CD8-positive, alpha-beta T cell (primary cell): ENCODE measurements at regions of chr1 and their contacts with region 1.

Region 1: DNA sequence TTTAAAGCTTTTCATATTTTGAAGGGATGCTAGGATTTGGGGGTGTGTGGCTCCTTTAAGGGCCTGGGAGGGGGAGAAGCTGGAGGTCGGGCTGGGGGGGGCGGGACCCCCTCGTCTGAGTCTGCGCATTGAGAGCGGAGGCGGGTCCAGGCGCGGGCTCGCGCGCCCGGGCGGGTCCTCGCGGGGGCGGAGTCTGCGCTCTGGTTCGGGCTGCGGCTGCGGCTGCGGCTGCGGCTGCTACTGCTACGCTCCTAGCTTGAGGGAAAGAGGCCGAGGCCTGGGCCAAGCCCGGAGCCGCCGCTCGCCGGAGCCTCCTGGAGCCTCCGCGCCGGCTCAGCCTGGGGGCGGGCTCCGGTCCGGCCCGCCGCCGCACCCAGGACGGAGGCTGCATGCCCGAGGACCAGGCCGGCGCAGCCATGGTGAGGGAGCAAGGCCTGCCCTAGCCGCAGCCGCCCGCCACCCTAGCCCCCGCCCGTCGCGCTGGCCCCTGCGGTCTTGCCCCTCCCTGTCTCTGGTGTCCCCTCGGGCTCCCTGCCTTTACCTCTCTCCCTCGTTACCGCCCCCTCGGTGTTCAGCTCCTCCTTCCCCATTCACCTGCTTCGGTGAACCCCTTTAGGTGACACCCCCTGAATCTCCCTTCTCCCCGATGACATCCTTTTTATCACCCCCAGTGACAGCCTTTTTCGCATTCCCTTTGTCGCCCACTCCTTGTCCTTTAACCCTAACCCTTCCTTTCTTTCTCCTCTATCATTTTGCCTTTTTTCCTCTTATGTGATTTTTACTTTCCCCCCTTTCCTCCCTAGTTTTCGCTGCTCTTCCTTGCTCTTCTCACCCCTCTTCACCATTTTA is at the start of gene ZYG11B:
- DNase-seq: peak; percentile 80 to 95 (median 89)
- ATAC-seq: peak; percentile 89
- H3K4me3 ChIP-seq: peak within 1 kb of the TSS; percentile 56 to 72
- H3K4me3 Mint-ChIP-seq: peak within 1 kb of the TSS; percentile 90
- H3K27ac ChIP-seq: peak within 1 kb of the TSS; percentile 37 to 48
- H3K27ac Mint-ChIP-seq: peak within 1 kb of the TSS; percentile 84
- H3K4me1 ChIP-seq: peaks cover 16% of the 10 kb centered on the region
- H3K4me1 Mint-ChIP-seq: peaks cover 42% of the 10 kb centered on the region
- H3K27me3 ChIP-seq: peaks cover 0 to 3% of the 10 kb centered on the region in 2 experiments
- H3K27me3 Mint-ChIP-seq: peaks cover 3% of the 10 kb centered on the region
- CTCF ChIP-seq: no peak
- total RNA-seq, gene ZYG11B: 9.8 to 10.4 TPM

Region 2: GRCh38 chr1:51616901-51617708 is 1109.4 kb before region 1 on chr1 and contains the start of gene OSBPL9:
- CTCF ChIA-PET with region 1: no interaction called
- POLR2A ChIA-PET with region 1: no interaction called
- intact Hi-C with region 1: loop called in 1 of 2 experiments (anchors 10 kb)
- DNase-seq: peak; percentile 78 to 94 (median 87)
- ATAC-seq: peak; percentile 93
- H3K4me3 ChIP-seq: peak within 1 kb of the TSS; percentile 90 to 98
- H3K4me3 Mint-ChIP-seq: peak within 1 kb of the TSS; percentile 100
- H3K27ac ChIP-seq: peak within 1 kb of the TSS; percentile 84
- H3K27ac Mint-ChIP-seq: peak within 1 kb of the TSS; percentile 99
- H3K4me1 ChIP-seq: peaks cover 23% of the 10 kb centered on the region
- H3K4me1 Mint-ChIP-seq: peaks cover 42% of the 10 kb centered on the region
- H3K27me3 ChIP-seq: no peaks in the 10 kb centered on the region
- H3K27me3 Mint-ChIP-seq: peaks cover under 1% of the 10 kb centered on the region
- CTCF ChIP-seq: no peak
- total RNA-seq, gene OSBPL9: 48.5 to 49.2 TPM

Region 3: DNA sequence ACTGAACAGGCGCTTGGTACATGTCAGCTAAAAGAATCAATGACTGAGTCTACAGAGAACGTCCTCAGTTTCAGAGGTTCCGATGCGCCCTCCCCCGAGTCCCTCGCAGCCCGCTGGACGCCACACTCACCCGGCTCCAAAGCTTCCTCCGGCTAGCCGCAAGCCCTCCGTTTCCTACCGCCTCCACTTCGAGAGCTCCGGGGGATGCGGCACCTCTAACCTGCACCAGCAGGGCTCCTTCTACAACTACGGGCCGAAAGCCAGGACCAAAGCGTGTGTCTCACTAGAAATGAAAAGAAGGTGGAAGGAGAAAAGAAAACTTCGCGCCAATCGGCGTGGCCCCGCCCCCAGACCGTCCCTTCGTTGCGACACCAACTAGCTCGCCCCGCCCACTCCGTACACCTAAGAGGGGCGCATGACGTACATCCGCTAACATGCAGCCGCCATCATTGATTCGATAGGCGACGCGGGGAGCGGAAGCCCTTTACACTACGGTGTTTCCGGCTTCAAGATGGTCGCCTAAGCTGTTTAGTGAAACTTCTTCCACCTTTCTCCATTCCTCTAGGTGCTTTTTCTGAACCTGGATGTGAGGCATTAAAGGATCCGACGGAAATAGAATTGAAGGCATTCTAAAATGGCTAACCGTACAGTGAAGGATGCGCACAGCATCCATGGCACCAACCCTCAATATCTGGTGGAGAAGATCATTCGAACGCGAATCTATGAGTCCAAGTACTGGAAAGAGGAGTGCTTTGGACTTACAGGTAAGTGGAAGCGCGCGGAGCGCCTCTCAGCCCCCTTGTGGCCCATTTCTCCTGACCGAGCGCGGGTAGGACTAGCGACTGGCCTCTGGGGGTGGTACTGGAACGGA is 322.1 kb before region 1 on chr1 and contains the starts of genes ORC1 and PRPF38A:
- CTCF ChIA-PET with region 1: no interaction called
- POLR2A ChIA-PET with region 1: interaction called, 4 read pairs
- intact Hi-C with region 1: loop called in 1 of 2 experiments (anchors 1 kb)
- DNase-seq: peak; percentile 94 to 99 (median 98)
- ATAC-seq: peak; percentile 92
- H3K4me3 ChIP-seq: peak within 1 kb of the TSS; percentile 87 to 92
- H3K4me3 Mint-ChIP-seq: peak within 1 kb of the TSS; percentile 99
- H3K27ac ChIP-seq: peak within 1 kb of the TSS; percentile 96
- H3K27ac Mint-ChIP-seq: peak within 1 kb of the TSS; percentile 98
- H3K4me1 ChIP-seq: peaks cover 26% of the 10 kb centered on the region
- H3K4me1 Mint-ChIP-seq: peaks cover 42% of the 10 kb centered on the region
- H3K27me3 ChIP-seq: no peaks in the 10 kb centered on the region
- H3K27me3 Mint-ChIP-seq: no peaks in the 10 kb centered on the region
- CTCF ChIP-seq: no peak
- total RNA-seq, gene ORC1: 1.2 to 1.3 TPM
- total RNA-seq, gene PRPF38A: 52.2 to 62.0 TPM

Region 4: DNA sequence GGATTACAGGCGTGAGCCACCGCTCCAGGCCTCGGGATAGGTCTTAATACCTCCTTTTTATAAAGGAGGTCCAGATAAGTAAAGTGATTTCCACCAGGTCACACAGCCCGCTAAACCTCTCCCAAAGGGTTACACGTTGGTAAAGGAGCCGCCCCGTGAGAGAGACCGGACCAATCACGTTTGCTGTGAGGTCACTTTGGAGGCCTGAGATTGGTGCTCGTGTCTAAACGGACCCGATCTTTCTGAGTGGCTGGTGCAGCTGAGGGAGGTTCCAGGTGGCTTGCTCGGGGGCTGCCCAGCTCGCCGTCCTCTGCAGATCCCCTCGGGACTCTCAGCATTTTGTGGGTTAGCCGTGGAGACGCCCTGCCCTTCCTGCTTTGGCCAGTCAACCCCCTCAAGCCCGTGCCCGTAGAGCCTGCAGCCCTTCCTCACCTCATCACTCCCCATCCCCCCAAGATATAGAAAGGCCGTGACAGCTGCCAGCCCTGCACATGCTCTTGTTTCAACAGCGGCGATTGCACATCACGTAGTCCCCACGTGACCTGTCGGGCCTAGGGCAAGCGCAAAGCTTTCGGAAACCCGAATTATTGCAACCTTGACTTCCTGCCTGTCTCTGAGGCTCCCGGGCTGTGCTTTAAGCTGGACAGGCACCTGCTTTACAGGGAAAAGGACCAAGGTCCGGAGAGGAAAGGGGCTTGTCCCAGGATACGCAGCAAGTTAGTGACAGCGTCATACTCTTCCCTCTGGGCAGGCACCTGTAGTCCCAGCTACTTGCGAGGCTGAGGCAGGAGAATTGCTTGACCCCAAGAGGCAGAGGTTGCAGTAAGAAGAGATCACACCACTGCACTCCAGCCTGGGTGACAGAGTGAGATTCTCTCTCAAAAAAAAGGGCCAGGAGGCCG is 23.4 kb before region 1 on chr1:
- CTCF ChIA-PET with region 1: no interaction called
- POLR2A ChIA-PET with region 1: interaction called, 27 read pairs
- intact Hi-C with region 1: loop called (anchors 1 kb)
- DNase-seq: peak; percentile 61 to 92 (median 78)
- ATAC-seq: peak; percentile 93
- H3K4me3 ChIP-seq: peak overlapping the region; percentile 54 to 59
- H3K4me3 Mint-ChIP-seq: peak overlapping the region; percentile 89
- H3K27ac ChIP-seq: peak overlapping the region; percentile 80 to 87
- H3K27ac Mint-ChIP-seq: peak overlapping the region; percentile 98
- H3K4me1 ChIP-seq: peaks cover 11% of the 10 kb centered on the region
- H3K4me1 Mint-ChIP-seq: peaks cover 19% of the 10 kb centered on the region
- H3K27me3 ChIP-seq: no peaks in the 10 kb centered on the region
- H3K27me3 Mint-ChIP-seq: peaks cover under 1% of the 10 kb centered on the region
- CTCF ChIP-seq: no peak

Region 5: DNA sequence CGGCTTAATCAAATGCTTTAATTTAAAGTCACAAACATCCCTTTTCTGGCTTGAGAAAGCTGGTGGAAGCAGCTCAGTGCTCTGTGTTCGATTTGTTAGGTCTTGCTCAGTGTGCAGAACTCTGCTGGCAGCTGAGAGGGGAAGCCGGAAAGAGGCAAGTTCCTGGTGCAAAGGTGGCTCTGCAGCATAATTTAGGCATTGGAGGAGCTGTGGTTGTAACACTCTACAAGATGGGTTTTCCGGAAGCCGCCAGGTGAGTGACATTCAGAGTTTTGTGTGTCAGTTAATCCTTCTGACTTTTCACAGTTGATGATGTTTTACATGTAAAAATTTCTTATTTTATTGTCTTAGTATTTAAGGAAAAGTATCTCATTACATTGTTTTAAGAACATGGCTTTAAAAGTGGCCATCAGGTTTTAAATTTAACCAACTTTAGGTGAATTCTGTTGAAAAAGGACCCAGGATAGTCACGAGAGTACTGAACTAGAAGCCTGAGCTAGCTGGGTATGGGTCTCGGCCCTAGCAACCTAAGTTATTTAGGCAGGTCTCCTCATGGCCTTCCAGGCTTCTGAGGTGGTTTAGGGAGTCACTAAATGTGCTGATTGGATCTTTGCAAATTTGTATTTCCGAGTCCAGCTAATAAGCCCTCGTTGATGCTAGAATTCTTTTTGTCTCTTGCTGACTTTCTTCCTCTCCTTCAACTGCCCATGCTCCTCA is 288.5 kb after region 1 on chr1:
- CTCF ChIA-PET with region 1: no interaction called
- POLR2A ChIA-PET with region 1: no interaction called
- intact Hi-C with region 1: loop called (anchors 1 to 2 kb)
- DNase-seq: peak; percentile 51 to 94 (median 79)
- ATAC-seq: peak; percentile 100
- H3K4me3 ChIP-seq: peak overlapping the region; percentile 67 to 68
- H3K4me3 Mint-ChIP-seq: peak overlapping the region; percentile 84
- H3K27ac ChIP-seq: peak overlapping the region; percentile 42 to 48
- H3K27ac Mint-ChIP-seq: peak overlapping the region; percentile 79
- H3K4me1 ChIP-seq: peaks cover 21% of the 10 kb centered on the region
- H3K4me1 Mint-ChIP-seq: peaks cover 38% of the 10 kb centered on the region
- H3K27me3 ChIP-seq: no peaks in the 10 kb centered on the region
- H3K27me3 Mint-ChIP-seq: no peaks in the 10 kb centered on the region
- CTCF ChIP-seq: no peak